Dorsolateral prefrontal cortex (tissue), 120 donors: ENCODE measurements at regions of chr3 and their contacts with region 1.

Region 1: DNA sequence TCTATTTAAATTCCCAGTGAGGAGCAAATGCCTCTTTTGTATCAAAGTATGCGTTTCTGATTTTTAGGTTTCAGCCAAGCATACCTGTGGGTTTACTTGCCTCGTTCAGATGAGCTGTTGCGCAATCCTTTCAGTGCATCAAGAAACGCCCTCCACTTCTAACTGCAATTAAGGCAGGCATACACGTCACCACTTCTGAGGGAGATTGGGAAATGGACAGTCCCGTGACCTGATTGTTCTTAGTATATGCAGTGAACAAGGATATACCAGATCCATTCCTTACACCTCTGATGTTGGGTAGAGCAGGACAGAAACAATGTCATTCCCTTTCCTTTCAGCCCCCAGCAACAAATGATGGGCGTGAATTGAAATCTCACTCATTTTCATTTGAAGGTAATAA is 219.0 kb downstream of the ITPR1 start:
- DNase-seq: no peak
- H3K4me3 ChIP-seq: peak overlapping the region in 1 of 59 donors; percentile 13
- H3K27ac ChIP-seq: peak overlapping the region in 12 of 59 donors; percentile 6 to 78 (median 36)
- H3K27me3 ChIP-seq: no peaks in the 10 kb centered on the region
- CTCF ChIP-seq: no peak

Region 2: GRCh38 chr3:4656059-4656458 is 56.1 kb before region 1 on chr3:
- intact Hi-C with region 1: loop called in 1 of 2 experiments (anchors 5 kb)
- DNase-seq: peak; percentile 38 to 82 (median 68)
- H3K4me3 ChIP-seq: no peak overlapping the region
- H3K27ac ChIP-seq: no peak overlapping the region
- H3K27me3 ChIP-seq: no peaks in the 10 kb centered on the region
- CTCF ChIP-seq: peak; percentile 54 to 88 (median 82)

Region 3: DNA sequence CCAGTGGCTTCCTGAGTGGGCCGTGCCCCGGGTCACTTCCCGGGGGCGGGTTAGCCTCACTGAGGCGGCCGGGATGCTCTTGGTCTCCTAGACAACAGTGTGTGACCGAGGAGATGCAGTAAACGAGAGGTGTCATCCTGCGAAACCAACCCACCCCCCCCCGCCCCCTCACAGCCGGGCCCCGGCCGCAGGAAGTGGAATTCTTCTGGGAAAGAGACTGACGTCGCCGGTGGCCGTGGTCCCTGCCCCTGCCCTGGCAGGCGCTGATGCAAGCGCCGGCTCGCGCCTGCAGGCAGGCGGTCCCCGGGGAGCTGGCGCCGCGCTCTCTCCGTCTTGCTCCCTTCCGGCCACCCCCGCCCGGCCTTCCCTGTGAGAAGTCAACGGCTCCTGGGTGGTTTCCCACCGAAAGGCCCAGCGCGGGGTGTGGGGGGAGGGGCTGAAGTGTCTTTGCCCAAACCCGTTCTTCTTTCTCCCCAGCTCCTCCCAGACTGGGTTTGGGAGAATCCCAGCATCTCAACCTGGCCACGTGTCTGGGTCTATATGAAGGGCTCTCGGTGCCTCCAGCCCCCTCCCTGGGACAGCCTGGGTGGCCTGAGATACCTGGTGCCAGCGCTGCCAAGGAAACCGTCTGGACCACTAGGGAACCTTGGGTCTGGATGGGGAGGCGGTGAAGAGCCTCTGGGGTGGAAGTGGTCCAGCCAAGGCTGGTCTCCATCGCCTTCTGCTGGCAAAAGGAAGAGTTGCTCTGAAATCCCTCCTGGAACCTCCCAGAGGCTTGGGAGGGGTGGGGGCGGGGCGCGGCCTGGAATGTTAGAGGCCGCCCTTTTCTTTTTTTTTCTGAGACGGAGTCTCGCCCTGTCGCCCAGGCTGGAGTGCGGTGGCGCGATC is 314.4 kb after region 1 on chr3:
- intact Hi-C with region 1: loop called in 1 of 2 experiments (anchors 2 kb)
- DNase-seq: peak; percentile 42 to 83 (median 74)
- H3K4me3 ChIP-seq: peak overlapping the region; percentile 31 to 78 (median 63)
- H3K27ac ChIP-seq: peak overlapping the region in 56 of 59 donors; percentile 33 to 93 (median 85)
- H3K27me3 ChIP-seq: no peaks in the 10 kb centered on the region
- CTCF ChIP-seq: peak; percentile 18 to 74 (median 57)

Region 4: GRCh38 chr3:5057857-5058324 is 345.7 kb after region 1 on chr3:
- intact Hi-C with region 1: loop called (anchors 10 kb)
- DNase-seq: peak in 9 of 10 donors; percentile 50 to 78 (median 68)
- H3K4me3 ChIP-seq: no peak overlapping the region
- H3K27ac ChIP-seq: no peak overlapping the region
- H3K27me3 ChIP-seq: no peaks in the 10 kb centered on the region
- CTCF ChIP-seq: peak; percentile 46 to 81 (median 72)

Region 5: DNA sequence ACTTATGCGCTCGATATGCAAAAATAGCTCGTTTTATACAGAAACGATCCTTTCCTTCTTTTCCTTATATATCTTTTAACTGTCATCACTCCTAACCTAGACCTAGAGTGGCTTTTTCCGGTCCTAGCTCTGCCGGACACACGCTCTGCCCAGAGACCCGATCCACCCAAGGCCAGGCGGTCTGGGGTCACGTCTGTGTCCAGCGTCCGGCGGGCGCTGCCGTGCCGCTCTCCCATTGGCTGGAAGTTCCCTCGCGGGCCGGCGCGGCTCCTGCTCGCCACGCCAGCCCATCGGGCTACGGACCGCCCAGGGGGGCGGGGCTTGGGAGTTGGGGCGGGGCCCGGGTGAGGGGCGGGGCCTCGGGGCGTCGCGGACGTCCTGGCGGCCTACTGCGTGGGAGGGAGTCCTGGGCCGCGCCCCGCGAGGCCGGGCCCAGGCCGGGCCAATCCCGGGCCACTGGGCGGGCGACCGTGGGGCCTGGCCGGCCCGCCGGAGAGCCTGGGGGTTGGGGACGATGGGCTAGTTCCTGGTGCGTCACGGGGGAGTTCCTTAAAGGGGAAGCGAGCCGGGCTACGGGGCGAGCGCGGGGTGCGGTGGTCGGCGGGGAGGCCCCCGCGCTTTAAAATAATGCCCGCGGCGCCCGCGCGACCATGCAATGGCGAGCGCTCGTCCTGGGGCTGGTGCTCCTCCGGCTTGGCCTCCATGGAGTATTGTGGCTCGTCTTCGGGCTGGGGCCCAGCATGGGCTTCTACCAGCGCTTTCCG is 475.2 kb after region 1 on chr3 and contains the start of gene EDEM1:
- intact Hi-C with region 1: loop called in 1 of 2 experiments (anchors 10 kb)
- DNase-seq: peak; percentile 87 to 98 (median 91)
- H3K4me3 ChIP-seq: peak within 1 kb of the TSS; percentile 63 to 100 (median 95)
- H3K27ac ChIP-seq: peak within 1 kb of the TSS; percentile 29 to 97 (median 89)
- H3K27me3 ChIP-seq: no peaks in the 10 kb centered on the region
- CTCF ChIP-seq: peak in 22 of 56 donors; percentile 3 to 60 (median 24)
- total RNA-seq, gene EDEM1: 12.6 to 36.0 (median 23.0) TPM

Region 6: GRCh38 chr3:5960126-5960525 is 1248.0 kb after region 1 on chr3:
- intact Hi-C with region 1: no loop called
- DNase-seq: no peak
- H3K4me3 ChIP-seq: no peak overlapping the region
- H3K27ac ChIP-seq: no peak overlapping the region
- H3K27me3 ChIP-seq: no peaks in the 10 kb centered on the region
- CTCF ChIP-seq: no peak